Panc1 (cell line): ENCODE measurements at regions of chr2 and their contacts with region 1.

Region 1: GRCh38 chr2:163132850-163133249 is 294.3 kb upstream of the KCNH7 start:
- DNase-seq: no peak
- ATAC-seq: no peak
- H3K4me3 ChIP-seq: no peak overlapping the region
- H3K27ac ChIP-seq: no peak overlapping the region
- H3K4me1 ChIP-seq: no peaks in the 10 kb centered on the region
- H3K27me3 ChIP-seq: no peaks in the 10 kb centered on the region
- CTCF ChIP-seq: peak; percentile 50; the same call in 1 of the 2 replicates

Region 2: DNA sequence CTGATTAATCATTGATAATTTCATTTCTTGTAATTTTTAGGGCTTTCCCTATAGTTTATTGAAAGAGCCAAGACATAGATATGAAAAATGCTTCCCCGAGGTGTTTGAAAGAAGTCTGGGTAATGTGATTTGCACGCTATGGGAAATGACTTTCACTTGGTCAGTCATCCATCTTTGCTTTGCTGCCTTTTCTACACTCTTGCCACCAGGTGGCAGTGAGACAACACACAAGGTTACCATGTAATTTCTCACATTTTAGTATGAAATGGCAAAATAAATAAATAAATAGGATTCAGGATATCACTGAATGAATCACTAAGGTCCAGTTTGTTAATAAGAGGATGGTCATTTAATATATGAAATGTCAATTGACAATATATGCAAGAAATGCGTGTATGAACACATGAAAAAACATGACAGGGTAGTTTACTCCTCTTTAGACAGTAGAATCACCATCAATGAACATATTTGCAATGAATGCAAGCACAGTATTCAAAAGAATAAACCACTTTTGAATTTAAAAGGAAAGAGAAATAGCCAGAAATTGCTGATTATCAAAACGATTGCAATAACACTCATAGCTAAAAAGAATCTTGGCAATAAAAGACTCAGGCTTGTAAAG is 242.0 kb before region 1 on chr2:
- CTCF ChIA-PET with region 1: no interaction called
- POLR2A ChIA-PET with region 1: no interaction called
- in situ Hi-C with region 1: no loop called
- intact Hi-C with region 1: loop called (anchors 1 kb)
- DNase-seq: peak; percentile 47
- ATAC-seq: peak; percentile 90
- H3K4me3 ChIP-seq: no peak overlapping the region
- H3K27ac ChIP-seq: no peak overlapping the region
- H3K4me1 ChIP-seq: no peaks in the 10 kb centered on the region
- H3K27me3 ChIP-seq: no peaks in the 10 kb centered on the region
- CTCF ChIP-seq: peak; percentile 82

Region 3: GRCh38 chr2:162989507-162989906 is 143.3 kb before region 1 on chr2:
- CTCF ChIA-PET with region 1: no interaction called
- POLR2A ChIA-PET with region 1: no interaction called
- in situ Hi-C with region 1: no loop called
- intact Hi-C with region 1: no loop called
- DNase-seq: no peak
- ATAC-seq: no peak
- H3K4me3 ChIP-seq: no peak overlapping the region
- H3K27ac ChIP-seq: no peak overlapping the region
- H3K4me1 ChIP-seq: no peaks in the 10 kb centered on the region
- H3K27me3 ChIP-seq: no peaks in the 10 kb centered on the region
- CTCF ChIP-seq: no peak